Activated T-helper 2 cell treated with anti-CD3 and anti-CD28 coated beads, Interferon-gamma antibody, Interleukin-2, Interleukin-4, amounts not matched to agents 10 μg/mL and 5 μg/mL and 100 μg/mL, durations not matched to agents 14 hours and 24 hours and 36 hours (primary cell): ENCODE measurements at regions of chr5 and their contacts with region 1.

Region 1: DNA sequence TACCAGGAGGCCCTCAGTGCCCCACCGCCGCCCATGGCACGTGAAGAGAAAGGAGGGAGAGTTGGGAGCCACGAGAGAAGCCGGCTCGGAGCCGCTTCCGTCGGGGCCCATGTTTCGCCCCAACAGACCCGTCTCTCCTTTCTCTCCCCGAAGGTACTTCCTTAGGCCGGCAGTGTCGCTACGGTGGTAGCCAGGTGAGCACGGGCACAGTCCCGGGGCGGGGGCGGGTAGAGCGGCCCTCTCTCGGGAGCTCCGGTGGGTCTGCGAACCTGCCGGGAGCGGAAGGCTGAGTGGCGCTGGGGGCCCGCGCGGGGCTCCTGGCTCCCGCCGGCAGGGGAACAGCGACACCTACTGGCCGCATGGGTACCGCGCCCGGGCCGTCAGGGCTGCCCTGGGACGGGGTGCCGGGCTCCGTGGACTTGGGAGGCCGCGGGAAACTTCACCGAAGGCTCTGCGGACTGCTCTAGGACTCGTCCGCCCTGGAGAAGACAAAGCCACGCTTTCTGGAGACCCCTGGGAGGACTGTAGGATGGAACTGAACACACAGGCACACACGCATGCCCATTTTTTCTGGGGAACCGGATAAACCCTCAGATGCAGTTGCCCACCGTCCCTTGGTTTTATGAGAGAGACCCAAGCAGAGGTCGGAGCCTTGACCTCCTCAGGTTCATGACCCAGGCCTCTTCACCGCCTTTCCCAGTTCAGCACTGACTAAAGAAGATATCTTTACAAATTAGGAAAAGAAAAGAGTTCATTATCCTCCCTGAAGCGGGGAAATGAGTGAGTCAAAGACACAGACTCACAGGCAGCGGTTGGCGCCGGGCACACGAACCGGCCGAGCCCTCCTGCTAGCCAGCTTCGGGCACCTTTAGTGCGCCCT is 202.5 kb downstream of the MEF2C start:
- DNase-seq: peak; percentile 72
- H3K4me3 Mint-ChIP-seq: no peak overlapping the region
- H3K27ac Mint-ChIP-seq: no peak overlapping the region
- H3K4me1 Mint-ChIP-seq: peaks cover 15% of the 10 kb centered on the region
- H3K27me3 Mint-ChIP-seq: peaks cover 83% of the 10 kb centered on the region

Region 2: GRCh38 chr5:87780831-87781760 is 899.4 kb before region 1 on chr5:
- intact Hi-C with region 1: loop called (anchors 1 kb)
- DNase-seq: peak; percentile 57
- H3K4me3 Mint-ChIP-seq: no peak overlapping the region
- H3K27ac Mint-ChIP-seq: no peak overlapping the region
- H3K4me1 Mint-ChIP-seq: peaks cover 3% of the 10 kb centered on the region
- H3K27me3 Mint-ChIP-seq: peaks cover 13% of the 10 kb centered on the region

Region 3: GRCh38 chr5:88140856-88141752 is 539.4 kb before region 1 on chr5:
- intact Hi-C with region 1: loop called (anchors 2 kb)
- DNase-seq: peak; percentile 94
- H3K4me3 Mint-ChIP-seq: no peak overlapping the region
- H3K27ac Mint-ChIP-seq: no peak overlapping the region
- H3K4me1 Mint-ChIP-seq: peaks cover 21% of the 10 kb centered on the region
- H3K27me3 Mint-ChIP-seq: peaks cover 37% of the 10 kb centered on the region

Region 4: GRCh38 chr5:88660947-88661805 is 19.3 kb before region 1 on chr5:
- intact Hi-C with region 1: loop called (anchors 1 kb)
- DNase-seq: peak; percentile 43
- H3K4me3 Mint-ChIP-seq: peak overlapping the region; percentile 70
- H3K27ac Mint-ChIP-seq: no peak overlapping the region
- H3K4me1 Mint-ChIP-seq: peaks cover 21% of the 10 kb centered on the region
- H3K27me3 Mint-ChIP-seq: peaks cover 60% of the 10 kb centered on the region

Region 5: GRCh38 chr5:88666761-88667495 is 13.6 kb before region 1 on chr5:
- intact Hi-C with region 1: loop called (anchors 1 kb)
- DNase-seq: no peak
- H3K4me3 Mint-ChIP-seq: peak overlapping the region; percentile 78
- H3K27ac Mint-ChIP-seq: no peak overlapping the region
- H3K4me1 Mint-ChIP-seq: peaks cover 28% of the 10 kb centered on the region
- H3K27me3 Mint-ChIP-seq: peaks cover 80% of the 10 kb centered on the region

Region 6: GRCh38 chr5:88690409-88691229 is 10.1 kb after region 1 on chr5:
- intact Hi-C with region 1: loop called (anchors 1 kb)
- DNase-seq: peak; percentile 60
- H3K4me3 Mint-ChIP-seq: no peak overlapping the region
- H3K27ac Mint-ChIP-seq: peak overlapping the region; percentile 73
- H3K4me1 Mint-ChIP-seq: peaks cover 7% of the 10 kb centered on the region
- H3K27me3 Mint-ChIP-seq: peaks cover 91% of the 10 kb centered on the region